ENCODE measurements at regions of chr7 and their contacts with region 1.

Region 1: GRCh38 chr7:13279854-13280435 is 592.5 kb downstream of the ARL4A start:
- DNase-seq: no peak
- H3K4me3 ChIP-seq: no peak overlapping the region
- H3K27ac ChIP-seq: no peak overlapping the region
- H3K4me1 ChIP-seq: no peaks in the 10 kb centered on the region
- H3K27me3 ChIP-seq: no peaks in the 10 kb centered on the region
- CTCF ChIP-seq: peak in 1 of 3 experiments; percentile 1; a peak in 2 of 4 replicates
- EP300 ChIP-seq: no peak
- POLR2A ChIP-seq: no peak
- RAD21 ChIP-seq: peak in 1 of 2 experiments; percentile 30

Region 2: GRCh38 chr7:13257661-13258060 is 22.3 kb before region 1 on chr7:
- CTCF ChIA-PET with region 1: no interaction called
- POLR2A ChIA-PET with region 1: no interaction called
- DNase-seq: no peak
- H3K4me3 ChIP-seq: no peak overlapping the region
- H3K27ac ChIP-seq: no peak overlapping the region
- H3K4me1 ChIP-seq: no peaks in the 10 kb centered on the region
- H3K27me3 ChIP-seq: no peaks in the 10 kb centered on the region
- CTCF ChIP-seq: no peak
- EP300 ChIP-seq: no peak
- POLR2A ChIP-seq: no peak
- RAD21 ChIP-seq: no peak

Region 3: GRCh38 chr7:13359656-13360055 is 79.7 kb after region 1 on chr7:
- CTCF ChIA-PET with region 1: interaction called, 54 read pairs
- POLR2A ChIA-PET with region 1: no interaction called
- DNase-seq: no peak
- H3K4me3 ChIP-seq: no peak overlapping the region
- H3K27ac ChIP-seq: no peak overlapping the region
- H3K4me1 ChIP-seq: no peaks in the 10 kb centered on the region
- H3K27me3 ChIP-seq: no peaks in the 10 kb centered on the region
- CTCF ChIP-seq: peak in 1 of 3 experiments; percentile 27; a peak in 1 of 4 replicates
- EP300 ChIP-seq: no peak
- POLR2A ChIP-seq: no peak
- RAD21 ChIP-seq: peak; percentile 37 to 56

Region 4: DNA sequence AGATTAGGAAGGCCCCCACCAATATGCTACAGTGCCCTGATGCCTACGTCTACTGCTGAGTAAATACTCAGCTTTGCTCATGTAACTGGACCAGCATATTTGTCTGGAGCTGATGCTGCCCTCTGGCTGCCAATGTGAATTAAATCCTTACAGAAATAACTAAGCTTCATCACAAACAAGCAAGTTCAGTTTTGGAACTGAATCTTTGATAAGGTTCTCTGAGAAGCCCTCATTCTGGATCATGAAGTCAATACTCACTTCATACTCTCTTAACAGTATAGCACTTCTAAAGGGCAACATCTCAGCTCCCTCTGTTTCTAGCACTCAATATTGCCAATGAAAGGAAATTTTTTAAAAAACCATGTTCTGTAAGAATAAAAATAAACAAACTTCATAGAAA is 462.9 kb after region 1 on chr7:
- CTCF ChIA-PET with region 1: interaction called, 10 read pairs
- POLR2A ChIA-PET with region 1: no interaction called
- DNase-seq: no peak
- H3K4me3 ChIP-seq: no peak overlapping the region
- H3K27ac ChIP-seq: no peak overlapping the region
- H3K4me1 ChIP-seq: no peaks in the 10 kb centered on the region
- H3K27me3 ChIP-seq: no peaks in the 10 kb centered on the region
- CTCF ChIP-seq: peak in 2 of 3 experiments; percentile 46 to 65; a peak in 3 of 4 replicates
- EP300 ChIP-seq: no peak
- POLR2A ChIP-seq: no peak
- RAD21 ChIP-seq: peak; percentile 61 to 73

Region 5: DNA sequence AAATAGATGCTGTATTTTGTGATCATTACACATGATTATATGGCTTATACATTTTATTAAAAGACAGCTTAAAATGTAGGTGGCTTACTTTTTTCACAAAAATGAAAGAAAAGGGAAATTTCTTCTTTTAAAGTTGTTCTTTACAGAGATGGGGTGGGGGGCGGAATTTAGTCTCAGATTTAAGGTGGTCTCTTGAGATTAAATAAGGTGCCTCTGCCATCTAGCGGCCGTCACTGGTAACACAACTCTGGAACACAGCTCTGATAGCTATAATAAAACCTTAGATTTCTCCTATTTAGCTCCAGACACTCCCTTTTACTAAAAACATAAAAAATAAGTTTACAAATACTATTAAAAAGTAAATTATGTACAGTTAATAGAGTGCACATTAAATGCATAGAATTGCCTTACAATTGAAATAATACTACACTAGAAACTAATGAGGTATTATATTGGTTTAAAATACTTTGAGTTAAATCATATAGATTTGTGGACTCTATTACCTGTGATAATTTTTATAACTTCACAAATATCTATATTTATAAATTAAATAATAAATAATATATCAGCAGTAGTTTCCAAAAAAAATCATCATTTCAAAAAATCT is 1411.8 kb after region 1 on chr7:
- CTCF ChIA-PET with region 1: interaction called, 62 read pairs
- POLR2A ChIA-PET with region 1: no interaction called
- DNase-seq: peak; percentile 29 to 75
- H3K4me3 ChIP-seq: no peak overlapping the region
- H3K27ac ChIP-seq: no peak overlapping the region
- H3K4me1 ChIP-seq: no peaks in the 10 kb centered on the region
- H3K27me3 ChIP-seq: no peaks in the 10 kb centered on the region
- CTCF ChIP-seq: peak in 2 of 3 experiments; percentile 61 to 65; a peak in 3 of 4 replicates
- EP300 ChIP-seq: no peak
- POLR2A ChIP-seq: no peak
- RAD21 ChIP-seq: peak; percentile 85 to 86

Measured in H1 (cell line).